Esophagus muscularis mucosa (tissue), 4 donors: ENCODE measurements at regions of chr1 and their contacts with region 1.

Region 1: DNA sequence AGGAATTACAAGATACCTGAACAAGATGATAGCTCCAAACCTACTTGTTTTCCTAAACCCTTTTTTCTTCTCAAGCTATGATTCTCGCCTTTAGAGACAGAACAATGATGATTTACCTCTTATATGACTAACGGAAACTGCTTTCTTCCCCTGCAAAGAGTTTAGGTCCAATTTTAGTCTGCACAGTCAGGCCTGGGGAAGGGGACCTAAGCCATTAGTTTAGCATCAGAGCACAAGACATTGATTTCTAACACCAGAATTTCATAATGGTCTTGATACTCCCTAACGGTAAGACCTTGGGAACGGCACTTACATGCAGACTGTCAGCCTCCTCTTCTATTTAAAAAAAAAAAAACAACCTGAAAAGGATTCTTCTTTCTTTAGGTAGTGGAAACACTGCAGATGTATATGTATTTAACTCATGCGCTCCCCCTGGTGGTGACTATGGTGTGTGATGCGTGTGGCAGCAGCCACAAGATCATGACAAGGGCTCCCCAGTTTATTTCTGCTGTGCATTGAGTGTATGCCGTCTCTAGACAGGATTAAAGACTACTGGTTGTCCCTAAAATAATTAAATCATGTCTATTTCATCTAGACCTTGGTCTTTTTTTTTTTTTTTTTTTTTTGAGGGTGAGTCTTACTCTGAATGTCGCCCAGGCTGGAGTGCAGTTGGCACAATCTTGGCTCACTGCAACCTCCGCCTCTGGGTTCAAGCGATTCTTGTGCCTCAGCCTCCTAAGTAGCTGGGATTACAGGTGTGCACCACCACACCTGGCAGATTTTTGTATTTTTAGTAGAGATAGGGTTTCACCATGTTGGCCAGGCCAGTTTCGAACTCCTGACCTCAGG is 37.3 kb upstream of the TMEM222 start:
- DNase-seq: peak; percentile 96
- H3K4me3 ChIP-seq: no peak overlapping the region
- H3K27ac ChIP-seq: no peak overlapping the region
- H3K4me1 ChIP-seq: no peaks in the 10 kb centered on the region
- H3K27me3 ChIP-seq: no peaks in the 10 kb centered on the region
- CTCF ChIP-seq: peak; percentile 74 to 88 (median 82)
- EP300 ChIP-seq: no peak
- POLR2A ChIP-seq: no peak

Region 2: GRCh38 chr1:27044613-27045151 is 240.0 kb before region 1 on chr1:
- intact Hi-C with region 1: loop called (anchors 10 kb)
- DNase-seq: peak; percentile 96
- H3K4me3 ChIP-seq: peak overlapping the region; percentile 21 to 44 (median 29)
- H3K27ac ChIP-seq: no peak overlapping the region
- H3K4me1 ChIP-seq: peaks cover 5 to 24% (median 16%) of the 10 kb centered on the region in 4 donors
- H3K27me3 ChIP-seq: no peaks in the 10 kb centered on the region
- CTCF ChIP-seq: peak; percentile 97 to 99 (median 98)
- EP300 ChIP-seq: no peak
- POLR2A ChIP-seq: no peak

Region 3: GRCh38 chr1:27102707-27103491 is 181.8 kb before region 1 on chr1:
- intact Hi-C with region 1: loop called (anchors 2 kb)
- DNase-seq: peak; percentile 96
- H3K4me3 ChIP-seq: no peak overlapping the region
- H3K27ac ChIP-seq: no peak overlapping the region
- H3K4me1 ChIP-seq: peaks cover 26 to 33% (median 30%) of the 10 kb centered on the region in 4 donors
- H3K27me3 ChIP-seq: no peaks in the 10 kb centered on the region
- CTCF ChIP-seq: peak in 2 of 3 experiments; percentile 94 to 96
- EP300 ChIP-seq: no peak
- POLR2A ChIP-seq: no peak

Region 4: GRCh38 chr1:27203946-27204345 is 80.7 kb before region 1 on chr1:
- intact Hi-C with region 1: loop called (anchors 2 kb)
- DNase-seq: no peak
- H3K4me3 ChIP-seq: no peak overlapping the region
- H3K27ac ChIP-seq: no peak overlapping the region
- H3K4me1 ChIP-seq: no peaks in the 10 kb centered on the region
- H3K27me3 ChIP-seq: peaks cover 0 to 5% (median 0%) of the 10 kb centered on the region in 4 donors
- CTCF ChIP-seq: no peak
- EP300 ChIP-seq: no peak
- POLR2A ChIP-seq: no peak